PC-9 (cell line): ENCODE measurements at regions of chr6 and their contacts with region 1.

Region 1: DNA sequence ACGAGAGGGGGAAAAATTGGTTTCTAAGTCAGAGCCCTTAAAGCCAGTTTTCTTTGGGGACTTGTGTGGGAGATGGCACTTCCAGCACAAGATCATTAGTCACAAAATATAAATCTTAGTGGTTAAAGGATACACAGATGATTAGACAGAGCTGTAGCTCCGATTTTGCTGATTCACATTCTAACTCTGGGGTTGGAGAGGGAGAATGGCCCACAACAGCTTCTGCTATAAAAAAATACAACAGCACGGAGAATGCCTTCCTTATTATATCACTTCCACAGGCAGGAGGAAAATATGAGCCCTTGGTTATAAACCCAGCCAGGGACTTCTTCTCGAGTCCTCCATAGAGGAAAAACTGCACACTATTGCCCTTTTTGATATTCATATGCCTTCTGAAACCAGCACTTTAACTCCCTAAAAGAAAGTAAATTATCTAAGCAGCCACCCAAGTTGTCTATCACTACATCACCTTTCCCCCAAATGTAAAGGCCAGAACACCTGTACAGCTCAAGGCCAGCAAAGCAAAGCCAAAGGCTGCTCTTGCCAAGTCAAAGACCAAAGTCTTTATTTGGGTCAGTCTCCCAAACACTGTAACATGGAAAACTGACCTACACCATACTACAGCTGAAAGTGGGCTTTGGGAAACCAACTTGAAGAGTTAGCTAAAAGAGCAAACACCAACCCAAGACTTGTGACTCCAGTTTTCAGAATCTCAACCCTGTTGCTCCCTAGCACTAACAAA is 10.4 kb downstream of the MRPL14 start:
- DNase-seq: peak; percentile 22 to 48
- H3K4me3 ChIP-seq: no peak overlapping the region
- H3K27ac ChIP-seq: peak overlapping the region; percentile 40; the same call in 1 of the 2 replicates
- H3K4me1 ChIP-seq: peaks cover 60% of the 10 kb centered on the region
- H3K27me3 ChIP-seq: no peaks in the 10 kb centered on the region
- CTCF ChIP-seq: no peak

Region 2: DNA sequence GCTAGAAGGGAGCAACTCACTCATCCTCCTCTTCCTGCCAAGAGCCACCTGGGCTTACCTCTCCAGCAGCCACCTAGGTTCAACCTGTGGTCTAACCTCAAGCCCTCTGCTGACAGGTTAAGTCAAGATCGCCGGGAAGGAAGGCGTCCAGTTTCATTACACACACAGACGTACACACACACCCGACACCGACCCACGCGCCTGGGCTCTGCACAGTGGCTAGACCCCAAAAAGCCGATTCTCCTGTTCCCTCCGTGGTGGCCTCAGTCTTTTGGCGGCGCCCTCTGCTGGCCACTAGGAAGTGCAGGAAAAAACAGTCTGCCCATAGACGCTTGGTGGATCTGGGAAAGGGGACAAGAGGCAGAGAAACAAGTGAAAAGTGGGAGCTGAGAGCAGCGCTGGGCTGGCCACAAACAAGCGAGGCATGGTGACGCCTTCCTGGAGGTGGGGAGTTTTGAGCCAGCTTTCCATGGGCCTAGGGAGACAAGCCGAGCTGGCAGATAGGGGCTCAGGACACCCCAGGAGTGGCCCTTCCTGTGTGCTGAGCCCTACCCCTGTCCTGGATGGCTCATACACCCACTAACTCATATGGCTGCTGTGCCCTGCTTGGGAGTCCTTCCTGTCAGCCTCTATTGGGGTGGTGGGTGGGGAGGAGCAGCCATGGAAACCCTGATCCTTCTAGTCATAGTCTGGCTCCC is 42.2 kb before region 1 on chr6:
- CTCF ChIA-PET with region 1: no interaction called
- POLR2A ChIA-PET with region 1: no interaction called
- intact Hi-C with region 1: no loop called
- DNase-seq: peak; percentile 67 to 87
- H3K4me3 ChIP-seq: peak overlapping the region; percentile 66
- H3K27ac ChIP-seq: peak overlapping the region; percentile 94
- H3K4me1 ChIP-seq: peaks cover 80% of the 10 kb centered on the region
- H3K27me3 ChIP-seq: no peaks in the 10 kb centered on the region
- CTCF ChIP-seq: peak; percentile 94

Region 3: GRCh38 chr6:44127186-44128019 is 10.6 kb after region 1 on chr6 and contains the starts of genes MRPL14 and TMEM63B:
- CTCF ChIA-PET with region 1: no interaction called
- POLR2A ChIA-PET with region 1: interaction called, 4 read pairs
- intact Hi-C with region 1: loop called (anchors 1 kb)
- DNase-seq: peak; percentile 46 to 88
- H3K4me3 ChIP-seq: peak within 1 kb of the TSS; percentile 94
- H3K27ac ChIP-seq: peak within 1 kb of the TSS; percentile 54
- H3K4me1 ChIP-seq: peaks cover 44% of the 10 kb centered on the region
- H3K27me3 ChIP-seq: no peaks in the 10 kb centered on the region
- CTCF ChIP-seq: no peak
- total RNA-seq, gene MRPL14: 96.3 and 97.9 TPM in 2 replicates
- total RNA-seq, gene TMEM63B: 36.1 and 38.5 TPM in 2 replicates

Region 4: DNA sequence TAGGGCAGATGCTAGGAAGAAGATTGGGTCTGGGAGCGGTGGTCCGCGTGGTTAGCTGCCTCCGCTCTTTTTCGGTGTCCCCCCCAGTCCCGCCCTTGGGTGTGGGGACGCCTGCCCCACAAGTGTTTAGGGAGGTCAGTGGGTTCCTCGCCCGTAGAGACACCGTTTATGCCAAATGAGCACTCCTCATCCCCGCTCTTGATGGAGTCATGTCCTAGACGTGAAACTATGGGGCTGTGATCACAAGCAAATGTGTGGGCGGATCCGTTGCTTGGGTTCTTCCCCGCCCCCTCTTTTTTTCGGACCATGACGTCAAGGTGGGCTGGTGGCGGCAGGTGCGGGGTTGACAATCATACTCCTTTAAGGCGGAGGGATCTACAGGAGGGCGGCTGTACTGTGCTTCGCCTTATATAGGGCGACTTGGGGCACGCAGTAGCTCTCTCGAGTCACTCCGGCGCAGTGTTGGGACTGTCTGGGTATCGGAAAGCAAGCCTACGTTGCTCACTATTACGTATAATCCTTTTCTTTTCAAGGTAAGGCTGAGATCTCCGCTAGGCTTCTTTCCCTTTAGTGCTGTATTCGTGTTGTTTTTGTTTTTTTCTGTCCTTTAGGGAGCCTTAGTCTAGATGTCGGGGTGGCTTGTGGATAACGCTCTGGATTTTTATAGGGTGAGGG is 130.0 kb after region 1 on chr6 and contains the start of gene HSP90AB1:
- CTCF ChIA-PET with region 1: no interaction called
- POLR2A ChIA-PET with region 1: no interaction called
- intact Hi-C with region 1: loop called (anchors 5 kb)
- DNase-seq: peak; percentile 94 to 97
- H3K4me3 ChIP-seq: peak within 1 kb of the TSS; percentile 98
- H3K27ac ChIP-seq: peak within 1 kb of the TSS; percentile 94
- H3K4me1 ChIP-seq: peaks cover 35% of the 10 kb centered on the region
- H3K27me3 ChIP-seq: no peaks in the 10 kb centered on the region
- CTCF ChIP-seq: no peak
- total RNA-seq, gene HSP90AB1: 895 and 1,136 TPM in 2 replicates